ENCODE measurements at regions of chr5 and their contacts with region 1.

Region 1: DNA sequence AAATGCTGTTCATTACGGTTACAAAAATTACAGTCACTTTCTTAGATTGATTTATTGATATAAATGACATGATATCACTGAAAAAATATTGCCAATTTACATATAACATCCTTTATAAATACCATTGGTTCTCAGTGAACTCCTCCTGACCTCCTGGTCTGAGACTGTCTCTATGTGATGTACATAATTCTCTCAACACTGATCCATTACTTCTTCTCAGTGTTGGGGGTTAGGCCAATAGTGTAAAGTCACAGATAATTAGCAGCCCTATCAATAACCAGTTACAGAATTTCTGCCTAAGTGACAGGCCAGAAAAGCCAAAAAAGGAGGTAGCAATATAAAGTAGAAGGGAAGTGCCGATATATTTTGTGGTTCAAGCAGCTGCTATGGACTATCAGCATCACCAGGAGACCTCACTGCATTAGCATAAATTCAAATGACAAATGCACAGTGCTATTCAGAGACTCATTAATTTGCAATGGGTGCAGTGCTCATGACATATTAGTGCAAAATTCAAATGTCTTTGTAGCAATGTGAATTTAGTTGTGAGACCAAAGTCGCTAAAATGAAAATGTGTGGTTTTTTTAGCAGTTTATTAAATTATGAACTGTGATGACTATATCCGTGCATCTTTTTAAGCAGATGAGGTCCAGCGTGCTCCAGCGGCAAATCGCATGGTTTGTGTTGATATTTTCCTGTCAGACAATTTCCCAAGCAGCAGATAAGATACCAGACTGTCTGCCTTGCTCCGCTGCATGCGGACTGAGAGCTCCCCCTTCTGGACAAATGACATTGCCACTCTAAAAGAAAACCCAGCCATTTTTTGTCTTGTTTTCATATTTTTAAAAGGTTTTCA is 144.6 kb downstream of the CETN3 start:
- H3K4me3 ChIP-seq: no peak overlapping the region
- H3K27ac ChIP-seq: no peak overlapping the region
- H3K4me1 ChIP-seq: no peaks in the 10 kb centered on the region
- CTCF ChIP-seq: peak; percentile 55; the same call in 1 of the 2 replicates

Region 2: GRCh38 chr5:90221942-90222341 is 43.0 kb before region 1 on chr5:
- CTCF ChIA-PET with region 1: no interaction called
- POLR2A ChIA-PET with region 1: no interaction called
- H3K4me3 ChIP-seq: no peak overlapping the region
- H3K27ac ChIP-seq: no peak overlapping the region
- H3K4me1 ChIP-seq: no peaks in the 10 kb centered on the region
- CTCF ChIP-seq: no peak

Region 3: GRCh38 chr5:90251447-90251846 is 13.5 kb before region 1 on chr5:
- CTCF ChIA-PET with region 1: interaction called, 10 read pairs
- POLR2A ChIA-PET with region 1: no interaction called
- H3K4me3 ChIP-seq: no peak overlapping the region
- H3K27ac ChIP-seq: no peak overlapping the region
- H3K4me1 ChIP-seq: no peaks in the 10 kb centered on the region
- CTCF ChIP-seq: no peak

Region 4: DNA sequence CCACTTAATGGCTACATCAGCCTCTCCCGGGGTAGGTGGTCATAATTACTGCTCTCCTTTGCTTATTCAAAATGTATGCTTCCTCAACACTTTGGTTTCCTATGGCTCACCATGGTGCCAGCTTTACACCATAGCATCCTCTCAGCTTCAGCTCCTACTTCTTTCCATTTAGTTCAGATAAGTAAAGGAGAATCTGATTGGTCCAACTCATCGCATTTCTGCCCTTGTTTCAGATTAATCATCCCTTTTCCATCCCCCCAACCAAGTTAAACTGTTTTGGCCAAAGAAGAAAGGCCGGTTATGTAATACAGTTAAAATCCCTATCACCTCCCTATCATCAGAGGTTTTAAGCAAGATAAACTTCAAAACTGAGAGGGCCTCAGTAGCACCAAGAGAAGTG is 14.2 kb after region 1 on chr5:
- CTCF ChIA-PET with region 1: interaction called, 10 read pairs
- POLR2A ChIA-PET with region 1: no interaction called
- H3K4me3 ChIP-seq: no peak overlapping the region
- H3K27ac ChIP-seq: no peak overlapping the region
- H3K4me1 ChIP-seq: no peaks in the 10 kb centered on the region
- CTCF ChIP-seq: no peak

Region 5: DNA sequence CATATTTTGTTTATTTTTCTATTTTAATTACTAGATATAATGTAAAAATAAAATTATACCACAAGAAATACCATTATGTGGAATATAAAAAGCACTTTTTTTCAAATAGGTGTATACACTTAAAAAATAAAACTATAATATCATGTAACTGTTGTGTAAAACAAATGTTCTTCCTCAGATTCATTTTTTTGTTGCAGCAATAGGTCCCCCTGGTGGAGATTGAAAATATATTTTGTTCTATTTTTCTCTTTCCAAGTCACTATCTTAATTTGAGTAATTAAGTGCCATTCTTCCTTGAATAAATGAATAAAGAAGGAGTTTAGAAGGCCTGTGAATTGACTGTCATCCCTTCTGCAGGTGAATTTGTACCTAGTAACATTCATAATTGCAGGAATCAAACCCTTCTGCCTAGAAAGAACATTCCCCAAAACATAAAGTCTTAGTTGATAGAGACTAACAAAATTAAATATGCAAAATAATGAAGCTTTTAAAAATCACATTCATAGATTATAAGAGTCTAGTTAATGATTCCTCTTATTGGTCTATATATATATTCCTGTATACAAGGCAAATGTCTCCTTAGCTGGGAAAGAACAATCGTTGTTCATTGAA is 121.3 kb after region 1 on chr5:
- CTCF ChIA-PET with region 1: interaction called, 11 read pairs
- POLR2A ChIA-PET with region 1: no interaction called
- H3K4me3 ChIP-seq: no peak overlapping the region
- H3K27ac ChIP-seq: no peak overlapping the region
- H3K4me1 ChIP-seq: no peaks in the 10 kb centered on the region
- CTCF ChIP-seq: no peak

Region 6: GRCh38 chr5:90398726-90399125 is 133.8 kb after region 1 on chr5:
- CTCF ChIA-PET with region 1: no interaction called
- POLR2A ChIA-PET with region 1: no interaction called
- H3K4me3 ChIP-seq: no peak overlapping the region
- H3K27ac ChIP-seq: no peak overlapping the region
- H3K4me1 ChIP-seq: no peaks in the 10 kb centered on the region
- CTCF ChIP-seq: no peak

Measured in HEK293 (cell line).